H1 (cell line): ENCODE measurements at regions of chr3 and their contacts with region 1.

Region 1: DNA sequence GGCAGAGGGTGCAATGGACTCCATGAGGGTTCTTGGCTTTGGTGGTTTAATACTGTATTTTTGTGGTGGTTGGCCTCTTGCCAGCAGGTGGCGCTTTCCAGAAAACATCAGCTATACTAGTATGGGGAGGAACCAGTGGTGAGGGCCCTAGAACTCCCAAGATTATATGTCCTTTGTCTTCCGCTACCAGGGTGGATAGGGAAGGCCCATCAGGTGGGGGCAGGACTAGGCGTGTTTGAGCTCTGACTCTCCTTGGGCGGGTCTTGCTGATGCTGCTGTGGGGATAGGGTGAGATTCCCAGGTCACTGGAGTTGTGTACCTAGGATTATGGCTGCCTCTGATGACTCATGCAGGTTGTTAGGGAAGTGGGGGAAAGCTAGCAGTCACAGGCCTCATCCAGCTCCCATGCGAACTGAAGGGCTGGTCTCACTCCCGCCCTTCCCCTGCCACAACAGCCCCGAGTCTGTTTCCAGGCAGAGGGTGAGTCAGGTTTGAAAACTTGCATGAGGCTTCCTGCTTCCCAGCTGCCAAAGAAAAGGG is 357.7 kb downstream of the OTOL1 start:
- DNase-seq: peak; percentile 49 to 75
- H3K4me3 ChIP-seq: no peak overlapping the region
- H3K27ac ChIP-seq: no peak overlapping the region
- H3K4me1 ChIP-seq: no peaks in the 10 kb centered on the region; a peak in 1 of 7 replicates
- H3K27me3 ChIP-seq: no peaks in the 10 kb centered on the region
- CTCF ChIP-seq: peak; percentile 19 to 48 (median 39)
- EP300 ChIP-seq: no peak
- POLR2A ChIP-seq: no peak
- RAD21 ChIP-seq: peak; percentile 38 to 55

Region 2: DNA sequence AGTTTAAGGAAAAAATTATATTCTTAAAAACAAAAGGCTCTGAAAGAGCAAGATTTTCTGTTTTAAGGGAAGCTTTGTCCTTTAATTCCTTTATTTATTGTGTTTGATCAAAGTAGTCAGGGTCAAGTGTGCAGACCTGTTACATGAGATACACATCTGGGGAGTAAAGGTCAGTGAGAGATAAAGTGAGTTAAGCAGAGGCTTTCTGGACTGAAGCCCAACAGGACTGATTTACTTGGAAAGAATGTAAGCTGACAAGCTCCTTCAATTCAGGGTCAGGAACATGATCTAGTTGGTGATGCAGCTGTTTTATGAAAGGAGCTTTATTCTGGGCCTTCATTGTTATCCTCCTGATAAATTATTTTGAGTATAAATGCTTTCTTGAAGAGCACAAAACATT is 378.4 kb before region 1 on chr3:
- CTCF ChIA-PET with region 1: no interaction called
- POLR2A ChIA-PET with region 1: no interaction called
- DNase-seq: no peak
- H3K4me3 ChIP-seq: no peak overlapping the region
- H3K27ac ChIP-seq: no peak overlapping the region
- H3K4me1 ChIP-seq: no peaks in the 10 kb centered on the region
- H3K27me3 ChIP-seq: no peaks in the 10 kb centered on the region
- CTCF ChIP-seq: no peak
- EP300 ChIP-seq: no peak
- POLR2A ChIP-seq: no peak
- RAD21 ChIP-seq: no peak

Region 3: GRCh38 chr3:161866176-161866575 is 11.9 kb after region 1 on chr3:
- CTCF ChIA-PET with region 1: interaction called, 22 read pairs
- POLR2A ChIA-PET with region 1: no interaction called
- DNase-seq: no peak
- H3K4me3 ChIP-seq: no peak overlapping the region
- H3K27ac ChIP-seq: no peak overlapping the region
- H3K4me1 ChIP-seq: no peaks in the 10 kb centered on the region
- H3K27me3 ChIP-seq: no peaks in the 10 kb centered on the region
- CTCF ChIP-seq: no peak
- EP300 ChIP-seq: no peak
- POLR2A ChIP-seq: no peak
- RAD21 ChIP-seq: no peak